PC-9 (cell line): ENCODE measurements at regions of chr18 and their contacts with region 1.

Region 1: DNA sequence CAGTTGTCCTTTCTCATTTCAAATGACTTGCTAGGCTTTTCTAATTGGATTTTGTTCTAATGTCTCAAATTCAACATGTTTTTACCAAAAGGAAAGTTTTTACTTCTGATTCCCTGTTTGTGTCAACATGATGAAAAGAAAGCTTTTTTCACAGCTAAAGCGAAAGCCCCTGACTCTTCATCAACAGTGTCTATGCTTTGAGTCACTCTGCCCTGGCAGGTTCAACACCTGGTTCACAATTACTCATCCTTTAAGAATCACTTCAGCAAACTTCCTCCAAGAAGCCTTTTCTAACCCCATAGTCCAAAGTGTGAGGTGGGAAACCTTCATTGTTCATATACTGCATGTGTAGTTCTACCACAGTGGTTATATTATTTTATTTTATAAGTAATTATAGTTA is 7.6 kb upstream of the DSG2 start:
- DNase-seq: peak in 1 of 2 experiments; percentile 89
- H3K4me3 ChIP-seq: peak overlapping the region; percentile 42; the same call in 1 of the 2 replicates
- H3K27ac ChIP-seq: peak overlapping the region; percentile 97
- H3K4me1 ChIP-seq: peaks cover 57% of the 10 kb centered on the region
- H3K27me3 ChIP-seq: no peaks in the 10 kb centered on the region
- CTCF ChIP-seq: no peak

Region 2: DNA sequence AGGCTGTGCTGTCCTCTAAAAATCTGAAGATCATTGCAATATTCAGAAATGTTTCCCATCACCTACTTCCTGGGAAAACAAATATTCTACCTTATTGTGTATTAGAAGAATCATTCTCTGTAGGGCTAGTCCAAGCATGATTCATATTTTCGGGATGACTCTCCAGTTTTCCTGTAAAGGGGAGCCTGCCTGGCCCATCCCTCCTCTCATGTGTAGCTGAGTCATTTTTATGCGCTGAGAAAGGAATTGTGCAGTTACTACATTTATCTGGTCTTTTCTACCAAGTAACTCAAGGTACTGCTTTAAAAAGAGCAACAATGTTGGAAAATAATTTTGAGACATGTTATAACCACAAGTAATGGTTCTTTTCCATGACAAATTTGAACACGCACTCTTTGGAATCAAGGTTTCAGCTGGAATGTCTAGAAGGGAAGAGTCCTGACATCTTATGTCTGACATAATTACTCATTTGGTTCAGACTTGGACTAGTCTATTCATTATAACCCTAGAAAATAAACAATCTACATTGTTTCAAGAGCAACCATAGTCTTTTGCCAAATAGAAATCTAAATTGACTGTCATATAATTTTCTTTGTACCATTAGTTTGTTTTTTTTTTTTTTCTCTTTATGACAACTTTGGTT is 36.2 kb before region 1 on chr18:
- CTCF ChIA-PET with region 1: no interaction called
- POLR2A ChIA-PET with region 1: interaction called, 5 read pairs
- intact Hi-C with region 1: loop called (anchors 5 kb)
- DNase-seq: peak; percentile 49 to 73
- H3K4me3 ChIP-seq: no peak overlapping the region
- H3K27ac ChIP-seq: peak overlapping the region; percentile 80
- H3K4me1 ChIP-seq: no peaks in the 10 kb centered on the region; the same call in 1 of the 2 replicates
- H3K27me3 ChIP-seq: no peaks in the 10 kb centered on the region
- CTCF ChIP-seq: no peak

Region 3: DNA sequence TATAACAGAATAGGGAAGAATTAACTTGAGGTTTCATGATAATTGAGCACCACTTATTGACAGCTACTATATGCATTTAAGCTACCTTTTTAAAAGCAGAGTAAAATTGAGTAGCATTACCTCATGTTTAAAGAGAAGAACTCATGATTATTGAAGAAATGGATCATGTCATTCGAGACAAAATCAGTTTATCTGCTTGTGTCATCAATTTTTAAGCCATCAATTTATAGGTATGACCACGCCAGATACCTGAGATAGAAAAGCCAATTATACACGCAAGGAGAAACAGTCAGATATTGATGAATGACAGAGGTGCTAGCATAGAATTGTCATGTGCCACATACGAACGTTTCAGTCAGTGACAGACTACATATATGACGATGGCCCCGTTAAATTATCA is 36.0 kb after region 1 on chr18:
- CTCF ChIA-PET with region 1: no interaction called
- POLR2A ChIA-PET with region 1: no interaction called
- intact Hi-C with region 1: no loop called
- DNase-seq: no peak
- H3K4me3 ChIP-seq: no peak overlapping the region
- H3K27ac ChIP-seq: no peak overlapping the region
- H3K4me1 ChIP-seq: no peaks in the 10 kb centered on the region
- H3K27me3 ChIP-seq: no peaks in the 10 kb centered on the region
- CTCF ChIP-seq: no peak

Region 4: GRCh38 chr18:31722369-31722957 is 232.1 kb after region 1 on chr18:
- CTCF ChIA-PET with region 1: interaction called, 14 read pairs
- POLR2A ChIA-PET with region 1: no interaction called
- intact Hi-C with region 1: no loop called
- DNase-seq: peak in 1 of 2 experiments; percentile 55
- H3K4me3 ChIP-seq: no peak overlapping the region
- H3K27ac ChIP-seq: no peak overlapping the region
- H3K4me1 ChIP-seq: no peaks in the 10 kb centered on the region
- H3K27me3 ChIP-seq: no peaks in the 10 kb centered on the region
- CTCF ChIP-seq: peak; percentile 81

Region 5: DNA sequence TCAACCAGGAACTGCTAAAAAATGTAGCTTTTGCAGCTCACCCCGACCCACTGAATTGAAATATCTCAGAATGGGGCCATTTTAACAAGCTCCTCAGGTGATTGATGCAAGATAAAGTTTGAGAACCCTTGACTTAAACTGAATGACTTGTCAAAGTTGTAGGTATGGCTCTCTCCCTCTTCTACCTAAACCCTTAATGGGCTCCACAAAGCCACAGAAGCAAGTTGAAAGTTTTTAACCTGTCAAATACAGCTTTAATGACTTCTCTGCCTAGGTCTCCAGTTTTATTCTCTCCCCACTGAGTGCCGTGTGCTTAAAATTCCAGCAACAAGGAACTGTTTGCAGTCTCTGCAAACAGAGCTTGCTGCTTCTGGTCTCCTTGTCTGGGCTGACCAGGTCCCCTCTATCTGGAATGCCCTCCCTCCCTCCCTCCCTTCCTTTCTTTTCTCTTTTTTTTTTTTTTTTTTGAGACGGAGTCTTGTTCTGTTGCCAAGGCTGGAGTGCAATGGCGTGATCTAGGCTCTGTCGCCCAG is 508.6 kb after region 1 on chr18:
- CTCF ChIA-PET with region 1: no interaction called
- POLR2A ChIA-PET with region 1: no interaction called
- intact Hi-C with region 1: no loop called
- DNase-seq: no peak
- H3K4me3 ChIP-seq: no peak overlapping the region
- H3K27ac ChIP-seq: no peak overlapping the region
- H3K4me1 ChIP-seq: no peaks in the 10 kb centered on the region
- H3K27me3 ChIP-seq: no peaks in the 10 kb centered on the region; the same call in 1 of the 2 replicates
- CTCF ChIP-seq: no peak